MCF 10A (cell line): ENCODE measurements at regions of chr3 and their contacts with region 1.

Region 1: DNA sequence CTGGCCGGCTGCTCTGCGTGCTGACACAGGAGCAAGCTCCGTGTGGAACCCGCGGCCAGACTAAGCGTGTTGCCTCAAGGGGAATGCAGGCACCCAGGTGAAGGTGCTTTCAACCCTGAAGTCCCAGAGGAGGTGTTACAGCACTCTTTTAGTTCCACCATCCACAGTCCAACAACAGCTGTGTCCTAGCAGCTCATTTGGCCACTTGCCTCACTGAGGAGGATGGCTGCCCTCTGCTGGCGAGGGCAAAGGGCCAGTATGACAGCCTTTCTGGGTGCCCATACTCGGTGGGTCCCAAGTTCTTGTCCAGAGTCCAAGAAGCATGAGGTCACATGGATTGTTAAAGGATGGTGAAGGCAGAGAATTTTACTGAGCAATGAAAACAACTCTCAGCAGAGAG is 87.8 kb downstream of the C3orf85 start:
- DNase-seq: peak; percentile 47
- H3K4me3 Mint-ChIP-seq: no peak overlapping the region
- H3K27ac Mint-ChIP-seq: no peak overlapping the region
- H3K4me1 Mint-ChIP-seq: no peaks in the 10 kb centered on the region
- H3K27me3 Mint-ChIP-seq: no peaks in the 10 kb centered on the region
- CTCF ChIP-seq: peak; percentile 14

Region 2: DNA sequence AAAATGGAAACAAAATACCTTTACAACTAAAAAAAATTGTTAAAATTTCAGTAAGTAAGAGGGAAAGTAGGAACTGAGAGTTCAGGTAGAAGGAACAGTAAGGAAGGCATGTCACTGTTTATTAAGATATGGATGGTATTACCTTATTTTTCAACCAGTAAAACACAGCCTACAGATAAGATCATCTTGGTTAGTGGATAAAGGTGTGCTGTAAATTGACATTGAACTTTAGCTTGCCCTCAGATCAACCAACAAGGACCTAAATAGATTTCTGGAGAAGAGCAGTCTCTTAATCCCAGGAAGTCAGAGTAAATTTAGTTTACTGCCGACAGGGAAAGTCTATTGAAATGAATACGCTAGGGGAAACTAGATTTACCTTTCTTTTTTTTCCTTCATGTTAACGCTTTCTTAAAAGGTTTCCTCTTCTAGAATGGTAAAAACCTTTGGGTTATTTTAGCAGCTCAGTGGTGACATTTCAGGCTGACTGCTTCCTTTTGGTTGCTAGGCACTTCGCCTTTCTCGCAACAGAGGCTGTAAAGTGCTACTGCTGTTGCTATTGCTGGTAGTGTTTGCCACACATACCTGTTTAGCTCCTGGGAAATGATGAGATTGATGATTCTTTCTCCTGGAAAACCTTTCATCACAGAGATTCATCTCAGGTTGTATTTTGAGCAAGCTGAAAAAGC is 621.9 kb before region 1 on chr3:
- CTCF ChIA-PET with region 1: no interaction called
- POLR2A ChIA-PET with region 1: no interaction called
- intact Hi-C with region 1: no loop called
- DNase-seq: no peak
- H3K4me3 Mint-ChIP-seq: no peak overlapping the region
- H3K27ac Mint-ChIP-seq: no peak overlapping the region
- H3K4me1 Mint-ChIP-seq: no peaks in the 10 kb centered on the region
- H3K27me3 Mint-ChIP-seq: no peaks in the 10 kb centered on the region
- CTCF ChIP-seq: no peak

Region 3: GRCh38 chr3:109050591-109051167 is 173.7 kb before region 1 on chr3:
- CTCF ChIA-PET with region 1: no interaction called
- POLR2A ChIA-PET with region 1: no interaction called
- intact Hi-C with region 1: loop called (anchors 10 kb)
- DNase-seq: peak; percentile 59
- H3K4me3 Mint-ChIP-seq: no peak overlapping the region
- H3K27ac Mint-ChIP-seq: no peak overlapping the region
- H3K4me1 Mint-ChIP-seq: no peaks in the 10 kb centered on the region
- H3K27me3 Mint-ChIP-seq: no peaks in the 10 kb centered on the region
- CTCF ChIP-seq: peak; percentile 18

Region 4: GRCh38 chr3:109213321-109213720 is 11.0 kb before region 1 on chr3:
- CTCF ChIA-PET with region 1: interaction called, 11 read pairs
- POLR2A ChIA-PET with region 1: no interaction called
- intact Hi-C with region 1: no loop called
- DNase-seq: no peak
- H3K4me3 Mint-ChIP-seq: no peak overlapping the region
- H3K27ac Mint-ChIP-seq: no peak overlapping the region
- H3K4me1 Mint-ChIP-seq: no peaks in the 10 kb centered on the region
- H3K27me3 Mint-ChIP-seq: no peaks in the 10 kb centered on the region
- CTCF ChIP-seq: no peak